ENCODE measurements at regions of chr1 and their contacts with region 1.

Region 1: DNA sequence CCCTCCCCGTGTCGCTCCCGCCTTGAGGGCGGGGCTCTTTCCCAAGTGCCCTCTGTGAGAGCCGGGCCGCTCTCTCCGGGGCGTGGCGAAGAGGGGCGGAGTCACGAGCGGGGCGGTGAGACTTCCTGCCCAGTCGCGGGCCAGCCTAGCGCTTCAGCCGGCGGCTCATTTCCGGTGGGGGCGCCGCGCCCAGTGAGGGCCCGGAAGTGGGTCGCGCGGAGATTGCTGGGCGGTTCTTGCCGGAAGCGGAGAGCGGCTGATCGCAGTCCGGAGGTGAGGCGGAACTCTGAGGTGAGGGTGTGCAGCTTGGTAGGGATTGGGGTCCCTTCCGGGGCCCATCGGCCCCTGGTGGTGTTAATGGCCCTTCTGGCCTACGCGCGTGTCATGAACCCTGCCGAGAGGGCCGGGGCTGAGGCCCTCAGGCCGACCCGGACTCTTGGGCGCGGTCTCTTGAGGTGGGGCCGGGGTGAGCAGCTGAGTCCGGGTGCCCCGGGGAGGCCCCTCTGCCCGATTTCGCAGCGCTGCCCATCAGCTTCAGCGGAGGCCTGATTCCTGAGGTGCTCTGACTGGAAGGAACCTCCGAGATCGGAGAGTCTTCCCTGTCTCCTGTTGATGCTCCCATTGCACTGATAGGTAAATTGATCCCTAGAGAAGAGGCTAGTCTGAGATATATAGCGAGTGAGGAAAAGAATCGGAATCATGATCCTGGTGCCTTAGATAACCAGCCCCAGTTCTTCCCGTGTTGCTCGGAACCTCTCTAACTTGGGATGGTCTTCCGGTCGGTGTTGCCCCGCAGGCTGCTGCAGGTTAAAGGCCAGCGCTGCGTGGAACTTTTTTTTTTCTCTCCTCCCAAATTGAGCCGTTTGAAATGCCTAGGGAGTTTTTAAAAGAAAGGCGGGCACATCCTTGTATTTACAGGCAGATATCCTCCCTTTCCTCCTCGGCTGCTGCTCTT is at the start of gene CAP1:
- DNase-seq: peak; percentile 99
- H3K4me3 ChIP-seq: peak within 1 kb of the TSS; percentile 59 to 88 (median 80)
- H3K27ac ChIP-seq: peak within 1 kb of the TSS; percentile 99 to 100 (median 100)
- H3K4me1 ChIP-seq: peaks cover 0 to 90% (median 73%) of the 10 kb centered on the region in 4 donors
- H3K27me3 ChIP-seq: no peaks in the 10 kb centered on the region
- CTCF ChIP-seq: no peak
- EP300 ChIP-seq: peak in 1 of 4 donors; percentile 68
- POLR2A ChIP-seq: peak in 1 of 2 donors; percentile 1
- total RNA-seq, gene CAP1: 177 to 234 (median 231) TPM

Region 2: GRCh38 chr1:39575191-39576015 is 465.4 kb before region 1 on chr1:
- intact Hi-C with region 1: loop called (anchors 5 kb)
- DNase-seq: peak; percentile 86
- H3K4me3 ChIP-seq: peak overlapping the region; percentile 56 to 86 (median 70)
- H3K27ac ChIP-seq: peak overlapping the region; percentile 84 to 92 (median 88)
- H3K4me1 ChIP-seq: peaks cover 0 to 32% (median 31%) of the 10 kb centered on the region in 4 donors
- H3K27me3 ChIP-seq: no peaks in the 10 kb centered on the region
- CTCF ChIP-seq: no peak
- EP300 ChIP-seq: peak in 2 of 4 donors; percentile 10 to 49
- POLR2A ChIP-seq: no peak

Region 3: GRCh38 chr1:40078512-40079333 is 37.9 kb after region 1 on chr1:
- intact Hi-C with region 1: loop called (anchors 5 kb)
- DNase-seq: no peak
- H3K4me3 ChIP-seq: no peak overlapping the region
- H3K27ac ChIP-seq: peak overlapping the region; percentile 16 to 77 (median 50)
- H3K4me1 ChIP-seq: peaks cover 0 to 24% (median 15%) of the 10 kb centered on the region in 4 donors
- H3K27me3 ChIP-seq: no peaks in the 10 kb centered on the region
- CTCF ChIP-seq: peak in 2 of 4 experiments; percentile 36 to 59
- EP300 ChIP-seq: no peak
- POLR2A ChIP-seq: no peak

Region 4: GRCh38 chr1:40399984-40400704 is 359.4 kb after region 1 on chr1:
- intact Hi-C with region 1: no loop called
- DNase-seq: no peak
- H3K4me3 ChIP-seq: no peak overlapping the region
- H3K27ac ChIP-seq: peak overlapping the region in 3 of 4 donors; percentile 11 to 51 (median 18)
- H3K4me1 ChIP-seq: peaks cover 0 to 8% (median 0%) of the 10 kb centered on the region in 4 donors
- H3K27me3 ChIP-seq: no peaks in the 10 kb centered on the region
- CTCF ChIP-seq: no peak
- EP300 ChIP-seq: no peak
- POLR2A ChIP-seq: no peak

Measured in sigmoid colon (tissue), 7 donors.